HEK293T (cell line): ENCODE measurements at regions of chr18 and their contacts with region 1.

Region 1: DNA sequence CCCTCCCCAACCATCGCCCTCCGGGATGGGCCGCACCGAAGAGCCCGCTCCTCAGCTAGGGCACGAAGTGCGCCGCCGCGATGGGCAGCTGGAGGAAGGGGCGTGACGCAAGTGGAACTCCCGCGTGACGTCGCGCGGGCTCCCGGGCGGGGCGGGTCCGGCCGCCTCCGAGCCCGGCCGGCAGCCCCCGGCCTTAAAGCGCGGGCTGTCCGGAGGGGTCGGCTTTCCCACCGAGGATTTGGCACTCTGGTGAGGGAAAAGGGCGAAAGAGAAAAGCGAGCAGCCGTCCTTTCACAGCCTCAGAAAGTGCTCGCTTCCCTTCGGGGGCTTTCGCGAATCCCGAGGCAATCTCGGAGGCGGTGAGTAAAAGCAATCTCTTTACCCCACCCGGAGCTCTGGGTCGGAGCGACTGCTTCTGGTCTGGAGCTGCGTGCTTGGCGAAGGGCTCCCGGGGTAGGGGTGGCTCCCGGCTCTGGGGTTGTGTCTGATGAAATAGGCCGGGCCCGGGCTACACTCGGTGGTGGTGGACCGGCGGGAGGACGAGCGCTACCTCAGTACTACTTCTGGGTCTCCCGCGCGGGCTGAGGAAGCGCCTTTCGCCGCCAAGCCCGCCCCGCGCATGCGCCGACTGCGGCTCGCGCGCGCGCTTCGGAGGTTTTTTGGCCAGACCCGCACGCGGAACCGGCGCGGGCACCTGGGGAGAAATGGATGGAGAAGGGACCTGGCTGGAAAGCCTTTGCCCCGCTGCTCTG is at the start of gene RBBP8:
- DNase-seq: peak; percentile 90

Region 2: DNA sequence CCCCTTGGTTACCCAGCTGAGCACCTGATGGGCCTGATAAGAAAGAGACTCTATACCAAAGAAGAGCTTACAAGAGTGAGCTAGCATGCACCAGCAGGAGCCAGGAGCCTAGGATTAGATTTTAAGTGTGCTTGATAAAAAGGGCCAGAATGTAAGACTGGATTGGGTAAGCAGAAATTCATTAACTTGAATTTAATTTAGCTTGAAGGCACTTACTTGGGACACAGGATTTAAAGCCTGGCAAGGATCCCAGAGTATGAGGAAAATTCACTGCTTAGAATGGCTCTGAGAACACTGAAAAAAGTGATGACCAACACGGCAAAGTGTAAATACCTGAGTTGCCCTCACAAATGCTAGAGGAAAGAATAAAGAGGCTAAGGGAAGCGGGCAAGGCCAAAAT is 91.5 kb before region 1 on chr18:
- CTCF ChIA-PET with region 1: no interaction called
- POLR2A ChIA-PET with region 1: interaction called, 11 read pairs
- DNase-seq: no peak

Region 3: DNA sequence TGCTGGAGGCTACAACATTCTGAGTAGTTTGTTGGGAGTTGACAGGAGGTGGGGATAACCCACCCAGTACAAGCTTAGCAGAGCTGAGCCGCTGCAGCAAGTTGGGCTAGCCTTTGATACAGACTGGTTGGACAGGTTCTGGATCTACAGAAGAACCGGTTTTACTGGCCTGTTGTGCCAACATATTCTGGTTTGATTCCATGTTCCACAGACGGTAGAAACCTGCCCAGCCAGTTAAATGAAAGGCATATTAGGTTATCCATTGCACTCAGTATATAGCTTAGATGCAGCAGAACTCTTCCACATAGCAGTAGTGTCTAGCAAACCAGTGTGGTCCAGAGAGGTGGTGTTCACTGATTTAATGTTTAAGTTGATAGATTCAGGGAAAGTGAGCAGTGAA is 19.5 kb before region 1 on chr18:
- CTCF ChIA-PET with region 1: interaction called, 4 read pairs
- POLR2A ChIA-PET with region 1: interaction called, 10 read pairs
- DNase-seq: no peak

Region 4: GRCh38 chr18:22921772-22922171 is 11.6 kb before region 1 on chr18:
- CTCF ChIA-PET with region 1: interaction called, 4 read pairs
- POLR2A ChIA-PET with region 1: interaction called, 26 read pairs
- DNase-seq: no peak

Region 5: GRCh38 chr18:22946846-22947245 is 13.5 kb after region 1 on chr18:
- CTCF ChIA-PET with region 1: interaction called, 3 read pairs
- POLR2A ChIA-PET with region 1: interaction called, 14 read pairs
- DNase-seq: no peak

Region 6: DNA sequence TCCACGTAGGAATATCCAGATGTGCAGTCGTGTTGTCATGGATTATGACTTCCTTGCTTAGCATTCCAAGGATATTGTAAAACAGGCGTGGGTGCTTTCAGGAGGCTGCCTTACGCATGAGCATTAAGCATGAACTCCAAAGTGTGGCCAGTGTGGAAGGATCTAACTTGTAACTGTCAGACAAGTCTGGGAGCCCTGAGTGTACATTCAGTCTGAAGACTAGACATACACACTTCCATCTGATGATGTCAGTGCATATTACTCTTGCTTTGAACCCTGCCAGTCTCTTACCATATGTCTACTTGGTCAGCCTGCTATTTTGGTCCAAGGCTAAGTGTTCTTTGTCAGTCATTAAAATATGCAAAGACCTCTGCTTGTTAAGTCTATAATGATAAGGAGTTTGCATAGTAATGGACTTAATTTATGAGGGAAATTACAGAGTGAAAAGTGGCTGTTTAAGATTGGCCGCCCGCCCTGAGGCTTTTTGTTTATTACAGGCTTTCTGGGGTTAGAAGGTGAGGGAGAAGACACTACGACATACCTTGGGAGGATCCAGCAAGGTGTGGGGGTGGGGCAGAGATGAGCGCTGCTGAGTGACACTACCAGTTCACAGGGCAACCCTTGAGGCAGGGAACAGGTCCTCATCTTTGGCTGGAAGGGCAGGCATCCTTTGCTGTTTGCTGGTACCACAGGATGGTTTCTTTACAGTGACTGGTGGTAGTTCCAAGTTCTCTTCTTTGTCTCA is 250.2 kb after region 1 on chr18:
- CTCF ChIA-PET with region 1: no interaction called
- POLR2A ChIA-PET with region 1: no interaction called
- DNase-seq: no peak